ENCODE measurements at regions of chr6 and their contacts with region 1.

Region 1: GRCh38 chr6:31441365-31442267 is 38.2 kb downstream of the MICA start:
- DNase-seq: peak; percentile 46 to 94
- H3K4me3 ChIP-seq: no peak overlapping the region
- H3K27ac ChIP-seq: no peak overlapping the region
- H3K4me1 ChIP-seq: peaks cover 0 to 8% (median 0%) of the 10 kb centered on the region in 4 experiments; a peak in 3 of 7 replicates
- H3K27me3 ChIP-seq: peaks cover 0 to 8% (median 0%) of the 10 kb centered on the region in 4 experiments; a peak in 3 of 7 replicates
- CTCF ChIP-seq: peak; percentile 87 to 91 (median 89)
- EP300 ChIP-seq: no peak
- POLR2A ChIP-seq: no peak
- RAD21 ChIP-seq: peak; percentile 84 to 86

Region 2: GRCh38 chr6:31351401-31352309 is 90.0 kb before region 1 on chr6:
- CTCF ChIA-PET with region 1: no interaction called
- POLR2A ChIA-PET with region 1: no interaction called
- DNase-seq: no peak
- H3K4me3 ChIP-seq: no peak overlapping the region
- H3K27ac ChIP-seq: no peak overlapping the region
- H3K4me1 ChIP-seq: 0 out of 7 replicates have a peak, but pooled peaks cover 0 to 2% (median 0%) of the 10 kb centered on the region in 4 experiments
- H3K27me3 ChIP-seq: peaks cover 3 to 10% (median 7%) of the 10 kb centered on the region in 4 experiments
- CTCF ChIP-seq: no peak
- EP300 ChIP-seq: no peak
- POLR2A ChIP-seq: no peak
- RAD21 ChIP-seq: no peak

Region 3: GRCh38 chr6:31403283-31403989 is 38.2 kb before region 1 on chr6 and contains the start of gene MICA:
- CTCF ChIA-PET with region 1: interaction called, 45 read pairs
- POLR2A ChIA-PET with region 1: interaction called, 12 read pairs
- DNase-seq: peak; percentile 74 to 94
- H3K4me3 ChIP-seq: peak within 1 kb of the TSS; percentile 59 to 81 (median 70)
- H3K27ac ChIP-seq: no peak within 1 kb of the TSS
- H3K4me1 ChIP-seq: peaks cover 2 to 14% (median 5%) of the 10 kb centered on the region in 4 experiments
- H3K27me3 ChIP-seq: peaks cover 0 to 10% (median 4%) of the 10 kb centered on the region in 4 experiments; a peak in 3 of 7 replicates
- CTCF ChIP-seq: 0 out of 4 replicates have a peak, but pooled peaks of 1 of the 3 experiments have one; percentile 4
- EP300 ChIP-seq: no peak
- POLR2A ChIP-seq: peak in 1 of 2 experiments; percentile 80; a peak in 2 of 3 replicates
- RAD21 ChIP-seq: no peak
- total RNA-seq, gene MICA: 11.3 and 12.5 TPM in 2 replicates

Region 4: GRCh38 chr6:31430449-31430848 is 11.2 kb before region 1 on chr6:
- CTCF ChIA-PET with region 1: interaction called, 18 read pairs
- POLR2A ChIA-PET with region 1: no interaction called
- DNase-seq: no peak
- H3K4me3 ChIP-seq: no peak overlapping the region
- H3K27ac ChIP-seq: no peak overlapping the region
- H3K4me1 ChIP-seq: no peaks in the 10 kb centered on the region
- H3K27me3 ChIP-seq: no peaks in the 10 kb centered on the region
- CTCF ChIP-seq: no peak
- EP300 ChIP-seq: no peak
- POLR2A ChIP-seq: no peak
- RAD21 ChIP-seq: no peak

Region 5: DNA sequence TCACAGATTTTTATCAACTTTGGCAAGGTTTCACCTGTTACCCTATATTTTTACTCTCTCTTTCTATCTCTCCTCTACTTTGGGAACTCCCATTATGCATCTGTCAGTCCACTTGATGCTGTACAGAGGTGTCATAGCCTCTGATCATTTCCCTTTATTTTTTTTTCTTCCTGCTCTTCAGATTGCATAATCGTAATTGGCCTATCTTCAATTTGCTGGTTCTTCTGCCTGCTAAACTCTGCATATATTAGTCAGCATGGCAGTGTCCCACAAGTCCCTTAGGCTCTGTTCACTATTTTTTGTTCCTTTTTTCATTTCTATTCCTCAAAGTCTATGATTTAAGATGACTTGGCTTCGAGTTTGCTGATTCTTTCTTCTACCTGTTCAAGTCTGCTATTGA is 11.6 kb after region 1 on chr6:
- CTCF ChIA-PET with region 1: interaction called, 15 read pairs
- POLR2A ChIA-PET with region 1: interaction called, 3 read pairs
- DNase-seq: no peak
- H3K4me3 ChIP-seq: no peak overlapping the region
- H3K27ac ChIP-seq: no peak overlapping the region
- H3K4me1 ChIP-seq: peaks cover 0 to 3% (median 0%) of the 10 kb centered on the region in 4 experiments; a peak in 1 of 7 replicates
- H3K27me3 ChIP-seq: no peaks in the 10 kb centered on the region
- CTCF ChIP-seq: no peak
- EP300 ChIP-seq: no peak
- POLR2A ChIP-seq: no peak
- RAD21 ChIP-seq: no peak

Region 6: GRCh38 chr6:31462964-31463870 is 21.6 kb after region 1 on chr6:
- CTCF ChIA-PET with region 1: interaction called, 10 read pairs
- POLR2A ChIA-PET with region 1: interaction called, 5 read pairs
- DNase-seq: peak; percentile 72 to 97
- H3K4me3 ChIP-seq: peak overlapping the region; percentile 19 to 61 (median 21); a peak in 6 of 8 replicates
- H3K27ac ChIP-seq: no peak overlapping the region
- H3K4me1 ChIP-seq: peaks cover 0 to 2% (median 0%) of the 10 kb centered on the region in 4 experiments; a peak in 1 of 7 replicates
- H3K27me3 ChIP-seq: peaks cover 0 to 12% (median 0%) of the 10 kb centered on the region in 4 experiments; a peak in 3 of 7 replicates
- CTCF ChIP-seq: no peak
- EP300 ChIP-seq: no peak
- POLR2A ChIP-seq: peak; percentile 23 to 88
- RAD21 ChIP-seq: peak in 1 of 2 experiments; percentile 16; a peak in 1 of 4 replicates

Region 7: GRCh38 chr6:31485055-31485454 is 43.4 kb after region 1 on chr6:
- CTCF ChIA-PET with region 1: no interaction called
- POLR2A ChIA-PET with region 1: no interaction called
- DNase-seq: no peak
- H3K4me3 ChIP-seq: no peak overlapping the region
- H3K27ac ChIP-seq: no peak overlapping the region
- H3K4me1 ChIP-seq: no peaks in the 10 kb centered on the region
- H3K27me3 ChIP-seq: no peaks in the 10 kb centered on the region; a peak in 1 of 7 replicates
- CTCF ChIP-seq: no peak
- EP300 ChIP-seq: no peak
- POLR2A ChIP-seq: no peak
- RAD21 ChIP-seq: no peak